Heart left ventricle (tissue), 16 donors: ENCODE measurements at regions of chr7 and their contacts with region 1.

Region 1: DNA sequence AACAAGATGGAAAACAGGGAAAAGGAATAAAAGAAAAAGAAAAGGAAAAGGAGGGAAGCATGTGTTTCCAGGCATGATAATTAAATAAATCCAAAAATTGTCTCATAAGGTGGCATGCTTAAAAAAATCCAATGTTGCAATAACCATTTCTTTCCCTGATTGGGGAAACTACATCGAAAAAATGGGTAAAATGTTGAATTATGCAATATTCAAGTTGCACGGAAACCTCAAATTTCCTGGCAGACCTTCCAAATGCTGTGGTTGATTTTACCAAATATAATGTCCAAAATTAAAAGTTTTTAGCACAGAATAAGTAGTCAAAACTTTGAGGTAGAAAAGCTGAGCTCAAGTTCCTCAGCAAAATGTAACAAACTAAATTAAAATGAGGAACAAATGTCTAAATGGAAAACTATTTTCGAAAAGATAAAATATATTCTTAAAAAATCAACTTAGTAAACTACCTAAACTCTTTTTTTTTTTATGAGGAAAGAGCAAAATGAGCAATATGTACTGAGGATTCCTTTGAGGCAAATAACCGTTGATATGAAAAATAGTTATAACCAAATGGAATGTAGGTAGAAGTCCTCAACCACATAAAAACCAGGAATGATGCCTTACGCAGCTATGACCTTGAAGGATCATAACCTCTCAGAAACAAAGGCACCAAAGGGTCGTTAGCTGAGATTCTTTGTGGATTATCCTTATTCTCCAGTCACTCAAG is 52.6 kb downstream of the MACC1 start:
- DNase-seq: no peak
- ATAC-seq: no peak
- H3K4me3 ChIP-seq: no peak overlapping the region
- H3K27ac ChIP-seq: peak overlapping the region in 4 of 12 donors; percentile 13 to 47 (median 21)
- H3K4me1 ChIP-seq: peaks cover 0 to 15% (median 0%) of the 10 kb centered on the region in 12 donors
- H3K27me3 ChIP-seq: no peaks in the 10 kb centered on the region
- CTCF ChIP-seq: no peak
- POLR2A ChIP-seq: no peak

Region 2: DNA sequence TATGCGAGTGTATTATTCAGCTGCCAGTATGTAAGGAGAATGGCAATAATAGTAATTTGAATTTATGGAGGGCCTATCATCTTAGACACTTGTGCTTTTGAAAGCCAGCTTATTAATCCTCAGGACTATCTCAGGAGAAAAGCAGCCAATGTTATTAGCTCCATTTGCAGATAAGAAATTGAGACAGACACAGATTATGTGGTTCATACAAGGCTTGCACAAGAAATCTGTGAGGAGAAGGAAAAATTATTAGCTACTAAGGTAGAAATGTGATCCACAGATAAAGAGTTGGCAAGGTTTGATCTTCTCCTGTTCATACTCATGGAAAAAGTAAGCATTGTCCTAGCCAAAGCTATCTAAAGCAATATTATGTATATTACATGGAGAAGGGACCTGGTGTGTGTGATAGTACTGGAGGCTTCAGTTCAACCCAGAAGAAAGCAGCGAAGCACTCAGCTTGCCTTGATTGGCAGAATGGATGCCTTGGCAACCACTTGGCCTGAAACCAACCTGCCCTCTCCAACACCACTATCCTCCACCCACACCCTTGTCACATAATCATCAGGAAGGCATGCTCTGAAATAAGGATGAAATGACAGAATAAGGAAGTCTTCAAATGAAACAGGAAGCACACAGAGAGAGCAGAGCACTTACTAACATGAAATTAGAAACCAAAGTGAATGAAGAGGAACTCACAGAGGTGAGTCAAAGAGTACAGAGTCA is 34.6 kb after region 1 on chr7:
- intact Hi-C with region 1: no loop called
- DNase-seq: peak in 2 of 5 donors; percentile 33 to 45
- ATAC-seq: peak in 3 of 4 donors; percentile 56 to 74 (median 60)
- H3K4me3 ChIP-seq: no peak overlapping the region
- H3K27ac ChIP-seq: peak overlapping the region in 1 of 12 donors; percentile 56
- H3K4me1 ChIP-seq: peaks cover 0 to 29% (median 0%) of the 10 kb centered on the region in 12 donors
- H3K27me3 ChIP-seq: no peaks in the 10 kb centered on the region
- CTCF ChIP-seq: no peak
- POLR2A ChIP-seq: no peak

Region 3: GRCh38 chr7:20310963-20311742 is 146.6 kb after region 1 on chr7:
- intact Hi-C with region 1: loop called in 6 of 10 experiments (anchors 5 to 10 kb)
- DNase-seq: no peak
- ATAC-seq: no peak
- H3K4me3 ChIP-seq: no peak overlapping the region
- H3K27ac ChIP-seq: no peak overlapping the region
- H3K4me1 ChIP-seq: peaks cover 0 to 4% (median 0%) of the 10 kb centered on the region in 12 donors
- H3K27me3 ChIP-seq: no peaks in the 10 kb centered on the region
- CTCF ChIP-seq: peak in 9 of 12 donors; percentile 17 to 48 (median 31)
- POLR2A ChIP-seq: no peak

Region 4: GRCh38 chr7:20330240-20330927 is 165.8 kb after region 1 on chr7 and contains the start of gene ITGB8:
- intact Hi-C with region 1: loop called in 1 of 10 experiments (anchors 10 kb)
- DNase-seq: peak; percentile 82 to 90 (median 88)
- ATAC-seq: peak; percentile 82 to 95 (median 94)
- H3K4me3 ChIP-seq: peak within 1 kb of the TSS; percentile 55 to 77 (median 66)
- H3K27ac ChIP-seq: peak within 1 kb of the TSS; percentile 58 to 91 (median 78)
- H3K4me1 ChIP-seq: peaks cover 0 to 21% (median 6%) of the 10 kb centered on the region in 12 donors
- H3K27me3 ChIP-seq: peaks cover 0 to 18% (median 4%) of the 10 kb centered on the region in 9 donors
- CTCF ChIP-seq: no peak
- POLR2A ChIP-seq: no peak
- total RNA-seq, gene ITGB8: 0.93 to 16.0 (median 2.7) TPM

Region 5: GRCh38 chr7:20407585-20408461 is 243.2 kb after region 1 on chr7:
- intact Hi-C with region 1: loop called in 1 of 10 experiments (anchors 10 kb)
- DNase-seq: peak; percentile 47 to 86 (median 68)
- ATAC-seq: peak; percentile 92 to 96 (median 94)
- H3K4me3 ChIP-seq: no peak overlapping the region
- H3K27ac ChIP-seq: peak overlapping the region; percentile 14 to 81 (median 53)
- H3K4me1 ChIP-seq: peaks cover 0 to 31% (median 20%) of the 10 kb centered on the region in 12 donors
- H3K27me3 ChIP-seq: no peaks in the 10 kb centered on the region
- CTCF ChIP-seq: no peak
- POLR2A ChIP-seq: no peak

Region 6: DNA sequence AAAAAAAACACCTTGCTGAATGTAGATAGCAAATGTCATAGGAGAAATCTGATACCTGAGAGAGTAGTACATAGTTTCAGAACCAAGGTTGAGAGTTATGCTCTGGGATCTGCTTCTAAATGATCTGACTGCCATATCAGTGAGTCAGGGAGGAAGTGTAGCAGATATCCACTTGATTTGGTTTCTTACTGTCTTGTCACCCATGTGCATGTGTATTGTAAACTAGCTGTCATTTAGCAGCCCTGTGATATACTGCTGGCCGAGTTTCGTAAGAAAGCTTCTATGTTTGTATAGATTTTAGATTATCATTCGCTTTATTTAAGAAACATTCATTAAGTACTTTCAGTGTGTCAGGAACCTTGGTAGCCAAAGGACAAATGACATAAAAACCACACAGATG is 1305.3 kb after region 1 on chr7:
- intact Hi-C with region 1: no loop called
- DNase-seq: no peak
- ATAC-seq: no peak
- H3K4me3 ChIP-seq: no peak overlapping the region
- H3K27ac ChIP-seq: no peak overlapping the region
- H3K4me1 ChIP-seq: peaks cover 0 to 5% (median 0%) of the 10 kb centered on the region in 12 donors
- H3K27me3 ChIP-seq: no peaks in the 10 kb centered on the region
- CTCF ChIP-seq: no peak
- POLR2A ChIP-seq: no peak